ENCODE measurements at regions of chr12 and their contacts with region 1.

Region 1: GRCh38 chr12:62522984-62523383 is 56.4 kb downstream of the MON2 start:
- DNase-seq: no peak
- H3K4me3 Mint-ChIP-seq: no peak overlapping the region
- H3K27ac Mint-ChIP-seq: no peak overlapping the region
- H3K4me1 Mint-ChIP-seq: peaks cover 31% of the 10 kb centered on the region
- H3K27me3 Mint-ChIP-seq: no peaks in the 10 kb centered on the region

Region 2: DNA sequence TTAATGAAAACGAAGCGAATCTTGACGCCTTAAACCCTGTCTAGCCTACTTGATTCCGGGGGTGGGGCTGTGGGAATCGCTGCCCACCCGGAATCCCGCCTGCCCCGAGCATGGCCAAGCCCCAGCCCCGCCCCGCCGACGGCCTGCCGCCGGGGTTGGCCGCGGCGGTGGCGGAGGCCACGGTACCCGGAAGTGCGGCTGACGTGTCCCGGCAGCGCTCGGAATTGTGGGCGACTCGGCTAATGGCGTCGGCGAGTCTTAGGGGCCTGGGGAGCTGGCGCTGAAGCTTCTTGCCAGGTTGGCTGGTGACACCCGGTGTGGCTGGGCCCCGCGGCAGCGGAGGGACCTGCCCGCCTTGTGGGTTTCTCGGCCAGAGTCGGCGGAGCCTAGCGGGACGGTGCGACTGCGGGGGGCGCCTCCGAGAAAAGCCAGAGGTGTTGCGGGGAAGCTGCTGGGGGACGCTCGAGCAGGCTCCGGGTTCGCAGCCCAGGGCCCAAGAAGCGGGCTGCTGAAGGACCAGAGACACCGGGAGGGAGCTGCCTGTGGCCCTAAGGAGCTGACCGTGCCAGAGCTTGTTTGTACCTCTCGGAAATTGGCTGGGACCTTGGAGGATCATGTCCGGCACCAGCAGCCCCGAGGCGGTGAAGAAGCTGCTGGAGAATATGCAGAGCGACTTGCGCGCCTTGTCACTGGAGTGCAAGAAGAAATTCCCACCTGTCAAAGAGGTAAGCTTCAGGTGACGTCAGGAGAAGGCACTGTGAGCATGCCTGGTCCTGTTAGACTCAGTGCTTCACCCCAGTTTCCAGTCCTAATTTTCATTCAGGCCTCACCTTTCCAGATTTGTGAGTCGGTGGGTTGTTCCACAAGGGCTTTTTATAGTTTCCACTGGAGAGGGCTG is 56.1 kb before region 1 on chr12 and contains the start of gene MON2:
- CTCF ChIA-PET with region 1: interaction called, 4 read pairs
- POLR2A ChIA-PET with region 1: no interaction called
- intact Hi-C with region 1: loop called (anchors 5 kb)
- DNase-seq: peak; percentile 90
- H3K4me3 Mint-ChIP-seq: peak within 1 kb of the TSS; percentile 93
- H3K27ac Mint-ChIP-seq: peak within 1 kb of the TSS; percentile 88
- H3K4me1 Mint-ChIP-seq: peaks cover 22% of the 10 kb centered on the region
- H3K27me3 Mint-ChIP-seq: no peaks in the 10 kb centered on the region
- total RNA-seq, gene MON2: 29.2 to 35.1 TPM

Region 3: DNA sequence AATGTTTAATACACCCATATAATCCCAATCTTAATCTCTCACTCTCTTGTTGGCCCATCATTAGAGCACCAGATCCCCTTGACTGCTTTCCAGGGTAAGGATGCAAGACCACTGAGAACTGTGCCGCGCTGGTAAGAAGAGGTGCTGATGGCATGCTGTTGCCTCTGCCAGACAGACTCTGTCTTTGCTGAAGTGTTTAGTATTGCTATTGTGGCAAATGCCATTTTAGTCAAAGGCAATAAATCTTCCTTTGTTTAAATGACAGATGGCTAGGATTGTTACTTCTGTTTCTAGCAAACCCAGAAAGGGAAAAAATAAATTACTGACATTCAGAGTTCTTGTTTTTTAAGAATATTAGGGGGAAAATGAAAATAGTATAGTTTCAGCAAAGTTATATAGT is 95.9 kb after region 1 on chr12:
- CTCF ChIA-PET with region 1: no interaction called
- POLR2A ChIA-PET with region 1: no interaction called
- intact Hi-C with region 1: no loop called
- DNase-seq: no peak
- H3K4me3 Mint-ChIP-seq: no peak overlapping the region
- H3K27ac Mint-ChIP-seq: no peak overlapping the region
- H3K4me1 Mint-ChIP-seq: peaks cover 8% of the 10 kb centered on the region
- H3K27me3 Mint-ChIP-seq: no peaks in the 10 kb centered on the region

Region 4: DNA sequence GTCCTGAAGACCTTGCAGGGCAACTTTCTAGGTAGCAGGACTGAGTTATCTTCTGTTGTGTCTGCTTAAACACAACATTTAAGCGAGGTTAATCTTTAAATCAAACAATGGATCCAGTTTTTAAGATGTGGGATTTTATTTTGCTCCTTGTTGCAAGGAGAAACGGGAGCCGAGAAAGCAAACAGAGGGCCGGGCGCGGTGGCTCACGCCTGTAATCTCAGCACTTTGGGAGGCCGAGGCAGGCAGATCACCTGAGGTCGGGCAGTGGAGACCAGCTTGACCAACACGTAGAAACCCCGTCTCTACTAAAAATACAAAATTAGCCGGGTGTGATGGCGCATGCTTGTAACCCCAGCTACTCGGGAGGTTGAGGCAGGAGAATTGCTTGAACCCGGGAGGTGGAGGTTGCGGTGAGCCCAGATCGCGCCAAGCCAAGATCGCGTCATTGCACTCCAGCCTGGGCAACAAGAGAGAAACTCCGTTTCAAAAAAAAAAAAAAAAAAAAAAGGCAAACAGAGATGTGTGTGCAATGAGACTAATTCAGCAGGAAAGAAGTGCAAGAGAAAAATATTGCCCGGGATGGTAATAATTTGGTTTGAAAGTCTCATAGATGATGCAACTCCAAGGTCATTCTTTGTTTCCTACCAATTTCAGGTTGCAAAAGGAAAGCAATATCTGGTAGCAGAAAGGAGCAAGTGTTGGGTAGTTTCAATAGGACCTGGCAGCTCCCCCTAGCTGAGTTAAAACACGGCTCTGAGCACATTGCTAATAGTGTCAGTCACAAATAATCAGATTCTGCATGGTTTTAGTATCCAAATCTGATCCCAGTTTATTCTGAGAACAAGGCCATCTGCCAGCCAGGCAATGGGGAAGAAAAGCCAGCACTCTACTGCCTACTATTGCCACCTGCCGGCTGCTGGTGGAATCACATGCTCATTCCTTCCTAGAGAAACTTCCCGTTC is 270.6 kb after region 1 on chr12:
- CTCF ChIA-PET with region 1: interaction called, 10 read pairs
- POLR2A ChIA-PET with region 1: interaction called, 3 read pairs
- intact Hi-C with region 1: loop called (anchors 2 kb)
- DNase-seq: peak; percentile 82
- H3K4me3 Mint-ChIP-seq: no peak overlapping the region
- H3K27ac Mint-ChIP-seq: no peak overlapping the region
- H3K4me1 Mint-ChIP-seq: no peaks in the 10 kb centered on the region
- H3K27me3 Mint-ChIP-seq: peaks cover 4% of the 10 kb centered on the region

Measured in activated CD4-positive, alpha-beta memory T cell treated with anti-CD3 and anti-CD28 coated beads for 36 hours (primary cell).